GM12878 (cell line): ENCODE measurements at regions of chr20 and their contacts with region 1.

Region 1: DNA sequence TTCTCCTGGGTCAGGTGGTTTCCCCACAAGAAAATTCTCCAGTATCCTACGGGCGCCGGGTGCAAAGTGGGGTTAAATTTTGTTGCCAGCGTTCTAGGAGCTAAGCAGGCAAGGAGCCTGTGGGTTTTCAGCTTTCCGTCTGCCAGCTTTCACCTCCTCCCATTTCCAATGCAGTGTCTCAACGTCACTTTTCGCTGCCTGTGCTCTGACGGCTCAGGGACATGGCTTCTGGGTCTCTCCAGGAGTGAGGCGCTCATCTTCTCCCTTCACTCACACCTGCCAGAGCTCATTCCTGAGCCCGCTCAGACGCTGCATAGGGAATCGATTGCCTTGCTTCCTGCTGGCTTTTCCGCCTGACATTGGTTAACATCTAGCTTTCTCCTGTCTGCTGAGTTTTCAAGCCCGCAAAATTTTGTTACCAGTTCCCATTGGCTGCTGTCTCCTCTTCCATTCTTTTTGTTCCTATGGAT is 7.3 kb upstream of the NAA20 start:
- DNase-seq: no peak
- ATAC-seq: no peak
- H3K4me3 ChIP-seq: no peak overlapping the region
- H3K27ac ChIP-seq: no peak overlapping the region
- H3K4me1 ChIP-seq: no peaks in the 10 kb centered on the region
- H3K27me3 ChIP-seq: peaks cover 0 to 2% of the 10 kb centered on the region in 2 experiments; a peak in 2 of 4 replicates
- CTCF ChIP-seq: no peak
- EP300 ChIP-seq: no peak
- POLR2A ChIP-seq: no peak
- RAD21 ChIP-seq: no peak

Region 2: DNA sequence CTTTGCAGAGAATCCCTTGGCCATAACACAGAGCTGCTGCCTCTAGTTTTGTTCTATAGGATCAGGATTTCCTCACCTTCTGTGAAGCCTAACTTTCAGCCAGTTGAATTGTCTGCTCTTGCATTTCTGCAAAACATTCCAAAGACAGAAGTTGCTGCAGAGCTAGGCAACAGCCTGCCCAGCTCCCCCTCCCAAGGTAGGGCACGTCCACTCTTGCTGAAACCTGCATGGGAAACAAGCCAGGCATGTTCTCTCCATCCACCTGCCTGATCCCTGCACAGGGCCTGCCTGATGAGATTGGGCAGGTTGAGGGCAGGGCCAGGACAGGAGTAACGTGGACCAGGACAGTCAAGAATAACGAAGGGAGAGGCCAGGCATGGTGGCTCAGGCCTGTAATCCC is 51.6 kb before region 1 on chr20:
- CTCF ChIA-PET with region 1: no interaction called
- POLR2A ChIA-PET with region 1: interaction called, 3 read pairs
- RAD21 ChIA-PET with region 1: no interaction called
- SMC1A ChIA-PET with region 1: no interaction called
- in situ Hi-C with region 1: loop called (anchors 5 kb)
- intact Hi-C with region 1: no loop called
- DNase-seq: no peak
- ATAC-seq: no peak
- H3K4me3 ChIP-seq: no peak overlapping the region
- H3K27ac ChIP-seq: no peak overlapping the region
- H3K4me1 ChIP-seq: peaks cover under 1% of the 10 kb centered on the region
- H3K27me3 ChIP-seq: no peaks in the 10 kb centered on the region; a peak in 1 of 4 replicates
- CTCF ChIP-seq: no peak
- EP300 ChIP-seq: no peak
- POLR2A ChIP-seq: no peak
- RAD21 ChIP-seq: no peak

Region 3: GRCh38 chr20:20102716-20103258 is 93.0 kb after region 1 on chr20:
- CTCF ChIA-PET with region 1: no interaction called
- POLR2A ChIA-PET with region 1: no interaction called
- RAD21 ChIA-PET with region 1: no interaction called
- SMC1A ChIA-PET with region 1: no interaction called
- in situ Hi-C with region 1: no loop called
- intact Hi-C with region 1: no loop called
- DNase-seq: no peak
- ATAC-seq: no peak
- H3K4me3 ChIP-seq: no peak overlapping the region
- H3K27ac ChIP-seq: no peak overlapping the region
- H3K4me1 ChIP-seq: no peaks in the 10 kb centered on the region
- H3K27me3 ChIP-seq: peaks cover 0 to 3% of the 10 kb centered on the region in 2 experiments; a peak in 3 of 4 replicates
- CTCF ChIP-seq: no peak
- EP300 ChIP-seq: no peak
- POLR2A ChIP-seq: no peak
- RAD21 ChIP-seq: no peak